Activated CD4-positive, alpha-beta memory T cell treated with anti-CD3 and anti-CD28 coated beads, Interleukin-2, amount 10 ng/mL, durations not matched to agents 7 days and 5 days (primary cell): ENCODE measurements at regions of chr5 and their contacts with region 1.

Region 1: DNA sequence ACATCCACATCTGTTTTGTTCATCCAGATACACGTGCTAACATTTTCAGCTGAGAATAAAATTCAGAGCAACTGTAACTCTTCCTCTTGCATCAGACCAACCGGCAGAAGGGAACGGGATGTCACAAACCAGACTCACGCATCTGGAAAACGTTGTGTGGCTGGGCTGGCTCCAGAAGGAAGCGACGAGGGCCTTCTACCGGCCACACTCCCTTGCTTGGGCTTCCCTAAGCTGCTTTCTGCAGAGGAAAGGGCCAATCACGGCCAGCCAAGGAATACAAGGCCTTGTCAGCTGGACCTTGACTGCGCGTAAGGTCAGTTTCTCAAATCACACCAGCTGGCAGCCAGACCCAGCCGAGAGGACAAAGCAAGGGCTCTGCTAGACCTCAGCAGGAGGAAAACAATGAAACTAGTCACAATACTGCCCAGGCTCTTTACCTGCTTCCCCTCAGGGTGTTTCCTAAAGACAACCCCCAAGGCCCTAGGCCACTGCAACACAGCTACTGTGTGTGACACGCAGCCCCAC is 106.1 kb downstream of the THBS4 start:
- DNase-seq: no peak
- H3K4me3 Mint-ChIP-seq: no peak overlapping the region
- H3K27ac Mint-ChIP-seq: peak overlapping the region; percentile 90
- H3K4me1 Mint-ChIP-seq: peaks cover 76% of the 10 kb centered on the region
- H3K27me3 Mint-ChIP-seq: no peaks in the 10 kb centered on the region

Region 2: GRCh38 chr5:80125962-80126480 is 15.2 kb before region 1 on chr5:
- CTCF ChIA-PET with region 1: interaction called, 16 read pairs
- POLR2A ChIA-PET with region 1: interaction called, 44 read pairs
- DNase-seq: no peak
- H3K4me3 Mint-ChIP-seq: peak overlapping the region; percentile 1
- H3K27ac Mint-ChIP-seq: peak overlapping the region; percentile 75
- H3K4me1 Mint-ChIP-seq: peaks cover 38% of the 10 kb centered on the region
- H3K27me3 Mint-ChIP-seq: no peaks in the 10 kb centered on the region

Region 3: DNA sequence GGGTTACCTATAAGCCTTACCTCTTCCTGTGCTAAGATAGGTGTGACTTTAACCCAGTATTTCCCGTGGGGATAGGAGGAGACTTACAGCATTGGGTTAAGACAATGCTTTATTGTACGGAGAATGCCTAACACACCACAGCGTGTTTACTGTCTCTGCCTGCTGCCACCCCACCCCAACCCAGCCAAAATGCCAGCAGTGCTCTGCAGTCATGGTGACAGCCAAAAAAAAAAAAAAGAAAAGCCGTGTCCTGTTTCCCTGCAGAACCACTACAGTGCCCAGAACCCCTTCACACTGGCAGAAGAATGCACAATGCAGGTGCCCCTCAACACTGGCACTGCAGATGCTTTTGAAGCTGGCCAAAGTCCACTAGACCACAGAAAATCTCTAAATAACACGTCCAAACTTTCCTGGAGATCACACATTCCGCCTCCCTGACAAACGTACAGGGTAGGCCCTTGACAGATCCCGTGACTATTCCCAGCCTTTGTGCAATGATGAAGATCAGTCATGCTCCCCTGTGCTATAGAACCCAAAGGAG is 12.4 kb after region 1 on chr5:
- CTCF ChIA-PET with region 1: interaction called, 4 read pairs
- POLR2A ChIA-PET with region 1: interaction called, 27 read pairs
- DNase-seq: no peak
- H3K4me3 Mint-ChIP-seq: no peak overlapping the region
- H3K27ac Mint-ChIP-seq: peak overlapping the region; percentile 71
- H3K4me1 Mint-ChIP-seq: peaks cover 47% of the 10 kb centered on the region
- H3K27me3 Mint-ChIP-seq: no peaks in the 10 kb centered on the region

Region 4: DNA sequence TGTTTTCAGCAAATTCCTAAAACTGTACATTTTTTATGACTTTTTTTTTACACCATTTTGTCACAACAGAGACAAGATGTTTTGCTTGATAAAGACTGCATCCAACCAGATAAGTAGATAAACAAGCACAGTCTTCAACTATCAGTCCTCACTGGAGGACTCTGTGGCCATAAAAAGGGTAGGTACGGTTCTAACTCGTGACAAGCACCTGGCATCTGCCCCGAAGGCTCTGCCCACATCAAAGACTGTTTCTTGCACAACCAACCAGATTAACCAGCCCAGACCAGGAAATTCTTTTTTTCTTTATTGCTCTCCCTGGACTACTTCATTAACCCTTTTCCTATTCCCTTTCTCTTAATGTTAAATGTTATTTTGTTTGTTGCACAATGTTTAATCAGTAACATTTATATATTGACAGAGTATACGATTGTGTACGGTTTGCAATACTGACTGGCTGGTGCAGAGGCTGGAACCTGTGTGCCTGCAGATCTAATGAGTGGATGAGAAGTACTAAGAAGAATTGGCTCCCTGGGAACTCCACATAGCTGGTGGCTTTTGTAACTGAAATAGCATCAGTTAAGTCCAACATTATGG is 40.5 kb after region 1 on chr5:
- CTCF ChIA-PET with region 1: no interaction called
- POLR2A ChIA-PET with region 1: interaction called, 13 read pairs
- DNase-seq: peak; percentile 62
- H3K4me3 Mint-ChIP-seq: peak overlapping the region; percentile 40
- H3K27ac Mint-ChIP-seq: peak overlapping the region; percentile 89
- H3K4me1 Mint-ChIP-seq: peaks cover 71% of the 10 kb centered on the region
- H3K27me3 Mint-ChIP-seq: no peaks in the 10 kb centered on the region